Activated CD8-positive, alpha-beta T cell treated with anti-CD3 and anti-CD28 coated beads for 36 hours (primary cell): ENCODE measurements at regions of chrX and their contacts with region 1.

Region 1: DNA sequence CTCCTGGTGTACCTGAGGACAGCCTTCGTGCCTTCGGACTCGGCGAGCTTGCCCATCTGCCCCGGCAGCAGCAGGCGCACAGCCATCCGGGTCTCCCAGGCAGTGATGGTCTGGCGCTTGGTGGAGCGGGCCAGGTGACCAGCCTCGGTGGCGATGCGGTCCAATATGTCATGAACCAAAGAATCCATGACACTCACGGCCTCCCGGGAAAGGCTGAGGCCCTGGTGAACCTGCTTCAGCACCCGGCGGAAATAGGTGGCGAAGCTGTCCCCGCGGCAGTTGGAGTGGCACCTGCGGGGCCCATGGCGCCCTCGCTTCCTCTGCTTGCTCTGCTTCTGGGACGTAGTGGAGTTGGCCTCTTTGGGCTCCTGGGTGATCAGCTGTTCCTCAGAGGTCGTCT is 350 bp downstream of the H2BW1 start:
- DNase-seq: no peak
- ATAC-seq: no peak
- H3K4me3 Mint-ChIP-seq: no peak overlapping the region
- H3K27ac Mint-ChIP-seq: no peak overlapping the region
- H3K4me1 Mint-ChIP-seq: no peaks in the 10 kb centered on the region
- H3K27me3 Mint-ChIP-seq: no peaks in the 10 kb centered on the region
- CTCF ChIP-seq: no peak

Region 2: GRCh38 chrX:103839404-103839803 is 173.8 kb before region 1 on chrX:
- CTCF ChIA-PET with region 1: no interaction called
- POLR2A ChIA-PET with region 1: no interaction called
- intact Hi-C with region 1: loop called (anchors 5 kb)
- DNase-seq: peak; percentile 11
- ATAC-seq: peak; percentile 53
- H3K4me3 Mint-ChIP-seq: no peak overlapping the region
- H3K27ac Mint-ChIP-seq: no peak overlapping the region
- H3K4me1 Mint-ChIP-seq: peaks cover 9% of the 10 kb centered on the region
- H3K27me3 Mint-ChIP-seq: peaks cover 3% of the 10 kb centered on the region
- CTCF ChIP-seq: no peak